Activated CD4-positive, alpha-beta memory T cell treated with anti-CD3 and anti-CD28 coated beads, Interleukin-2, amount 10 ng/mL, durations not matched to agents 7 days and 5 days (primary cell): ENCODE measurements at regions of chr14 and their contacts with region 1.

Region 1: DNA sequence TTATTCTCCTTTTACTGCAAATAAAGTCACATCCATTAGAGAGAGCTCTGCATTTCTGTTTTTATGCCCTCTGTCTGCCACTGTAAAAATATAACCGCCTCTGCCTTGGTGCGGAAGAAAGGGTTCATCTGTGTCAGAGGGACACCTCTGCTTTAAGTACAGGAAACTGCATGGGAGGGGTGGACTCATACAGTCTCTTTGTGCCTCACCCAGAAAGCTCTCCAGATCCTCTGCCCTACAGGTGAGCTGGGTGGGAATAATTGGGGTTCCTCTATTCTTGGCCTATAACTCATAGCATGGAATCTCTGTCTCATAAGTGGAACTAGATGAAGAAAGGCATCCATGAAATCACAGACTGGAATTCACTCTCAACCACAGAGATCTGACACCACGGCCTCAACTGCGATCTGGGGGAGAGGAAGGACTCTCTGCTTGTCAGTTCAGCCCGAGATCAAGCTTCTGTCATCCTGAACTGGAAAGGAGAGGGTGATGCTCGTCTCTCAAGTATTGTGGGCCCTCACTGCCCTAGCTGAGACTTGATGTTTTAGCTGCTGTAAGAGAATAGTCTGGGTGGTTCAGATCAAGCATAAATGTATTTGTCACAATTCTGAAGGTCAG is 702.3 kb downstream of the TMEM121 start:
- DNase-seq: peak; percentile 29
- H3K4me3 Mint-ChIP-seq: no peak overlapping the region
- H3K27ac Mint-ChIP-seq: peak overlapping the region; percentile 11
- H3K4me1 Mint-ChIP-seq: peaks cover 22% of the 10 kb centered on the region
- H3K27me3 Mint-ChIP-seq: no peaks in the 10 kb centered on the region

Region 2: GRCh38 chr14:105760691-105761346 is 467.8 kb before region 1 on chr14:
- CTCF ChIA-PET with region 1: no interaction called
- POLR2A ChIA-PET with region 1: no interaction called
- DNase-seq: no peak
- H3K4me3 Mint-ChIP-seq: no peak overlapping the region
- H3K27ac Mint-ChIP-seq: no peak overlapping the region
- H3K4me1 Mint-ChIP-seq: no peaks in the 10 kb centered on the region
- H3K27me3 Mint-ChIP-seq: peaks cover 4% of the 10 kb centered on the region

Region 3: GRCh38 chr14:106277503-106277902 is 48.9 kb after region 1 on chr14:
- CTCF ChIA-PET with region 1: interaction called, 12 read pairs
- POLR2A ChIA-PET with region 1: no interaction called
- DNase-seq: no peak
- H3K4me3 Mint-ChIP-seq: no peak overlapping the region
- H3K27ac Mint-ChIP-seq: no peak overlapping the region
- H3K4me1 Mint-ChIP-seq: peaks cover 13% of the 10 kb centered on the region
- H3K27me3 Mint-ChIP-seq: peaks cover 44% of the 10 kb centered on the region

Region 4: GRCh38 chr14:106343626-106344025 is 115.0 kb after region 1 on chr14:
- CTCF ChIA-PET with region 1: no interaction called
- POLR2A ChIA-PET with region 1: no interaction called
- DNase-seq: no peak
- H3K4me3 Mint-ChIP-seq: no peak overlapping the region
- H3K27ac Mint-ChIP-seq: no peak overlapping the region
- H3K4me1 Mint-ChIP-seq: no peaks in the 10 kb centered on the region
- H3K27me3 Mint-ChIP-seq: peaks cover 16% of the 10 kb centered on the region